CD8-positive, alpha-beta T cell (primary cell): ENCODE measurements at regions of chr9 and their contacts with region 1.

Region 1: DNA sequence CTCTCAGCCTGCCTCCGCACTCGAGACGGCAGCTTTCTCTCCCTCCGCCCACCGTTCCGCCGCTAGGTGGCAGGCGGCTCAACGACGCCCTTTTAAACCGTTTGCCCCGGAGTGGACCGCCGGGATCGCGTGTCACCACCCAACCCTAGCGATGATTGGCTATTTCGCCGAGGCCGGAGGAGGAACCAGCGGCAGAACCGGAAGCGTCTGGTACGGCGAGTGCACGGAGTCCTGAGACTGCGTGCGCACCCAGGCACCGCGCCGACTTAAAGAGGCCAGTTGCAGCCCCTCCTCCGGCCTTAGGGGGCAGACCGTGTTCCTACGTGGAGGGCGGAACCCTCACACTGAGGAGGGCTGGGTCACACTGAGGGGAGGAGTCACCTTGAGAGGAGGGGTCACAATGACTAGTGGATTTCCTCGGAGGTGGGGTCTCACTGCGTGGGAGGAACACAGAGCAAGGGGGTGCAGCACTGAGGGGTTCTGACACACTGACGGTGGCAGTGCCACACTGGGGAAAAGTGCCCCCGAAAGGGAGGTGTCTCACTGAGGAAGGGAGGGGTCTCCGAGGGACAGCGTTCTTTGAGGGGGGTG is 980 bp upstream of the TESK1 start:
- DNase-seq: peak; percentile 98 to 100 (median 99)
- ATAC-seq: peak; percentile 91
- H3K4me3 ChIP-seq: peak overlapping the region; percentile 61 to 83
- H3K4me3 Mint-ChIP-seq: peak overlapping the region; percentile 93
- H3K27ac ChIP-seq: peak overlapping the region; percentile 61 to 83
- H3K27ac Mint-ChIP-seq: peak overlapping the region; percentile 93
- H3K4me1 ChIP-seq: peaks cover 23% of the 10 kb centered on the region
- H3K4me1 Mint-ChIP-seq: peaks cover 31% of the 10 kb centered on the region
- H3K27me3 ChIP-seq: no peaks in the 10 kb centered on the region
- H3K27me3 Mint-ChIP-seq: no peaks in the 10 kb centered on the region
- CTCF ChIP-seq: peak; percentile 92

Region 2: GRCh38 chr9:34665381-34666250 is 938.5 kb before region 1 on chr9:
- CTCF ChIA-PET with region 1: no interaction called
- POLR2A ChIA-PET with region 1: no interaction called
- intact Hi-C with region 1: loop called (anchors 10 kb)
- DNase-seq: peak; percentile 75 to 96 (median 89)
- ATAC-seq: peak; percentile 83
- H3K4me3 ChIP-seq: peak overlapping the region; percentile 86 to 93
- H3K4me3 Mint-ChIP-seq: peak overlapping the region; percentile 92
- H3K27ac ChIP-seq: peak overlapping the region; percentile 96 to 99
- H3K27ac Mint-ChIP-seq: peak overlapping the region; percentile 97
- H3K4me1 ChIP-seq: peaks cover 37% of the 10 kb centered on the region
- H3K4me1 Mint-ChIP-seq: peaks cover 36% of the 10 kb centered on the region
- H3K27me3 ChIP-seq: no peaks in the 10 kb centered on the region
- H3K27me3 Mint-ChIP-seq: no peaks in the 10 kb centered on the region
- CTCF ChIP-seq: no peak

Region 3: DNA sequence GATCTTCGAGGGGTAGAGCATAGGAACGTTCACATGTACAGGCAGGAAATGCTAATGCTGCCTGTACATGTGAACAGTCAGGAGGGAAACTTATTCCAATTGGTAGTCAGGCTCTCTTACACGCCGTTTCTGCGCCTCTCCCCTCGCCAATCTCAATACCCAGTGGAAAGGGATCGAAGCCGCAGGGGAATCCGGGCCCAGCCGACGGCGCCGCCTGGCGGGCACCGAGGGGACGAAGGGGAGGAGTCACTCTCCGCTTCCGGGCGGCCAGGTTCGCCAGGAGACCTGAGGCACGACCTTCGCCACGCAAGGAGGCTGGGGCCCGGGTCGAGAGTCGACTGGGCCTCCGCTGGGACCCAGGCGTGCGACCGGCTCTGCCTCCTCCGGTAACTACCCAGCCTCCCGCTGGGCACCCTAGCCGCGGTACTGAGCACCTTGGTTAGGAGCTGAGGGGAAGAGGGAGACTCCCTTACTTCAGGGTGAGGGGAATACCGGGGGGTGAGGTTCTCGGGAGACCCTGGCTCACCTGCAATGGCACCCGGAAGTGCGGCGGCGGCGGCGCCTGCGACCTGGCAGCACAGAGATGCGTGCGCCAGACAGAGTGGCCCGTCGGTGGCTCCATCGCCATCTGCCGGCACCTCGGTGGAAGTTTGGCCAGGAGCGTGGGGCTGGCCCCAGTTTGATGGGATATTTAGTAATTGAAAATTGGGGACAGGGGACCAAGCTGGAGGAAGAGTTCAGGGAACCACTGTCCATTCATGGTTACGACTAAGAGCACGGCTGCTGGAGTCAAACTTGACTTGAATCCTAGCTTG is 507.8 kb before region 1 on chr9 and contains the start of gene PIGO:
- CTCF ChIA-PET with region 1: no interaction called
- POLR2A ChIA-PET with region 1: no interaction called
- intact Hi-C with region 1: loop called in 1 of 2 experiments (anchors 5 kb)
- DNase-seq: peak; percentile 78 to 94 (median 89)
- ATAC-seq: peak; percentile 90
- H3K4me3 ChIP-seq: peak within 1 kb of the TSS; percentile 95 to 99
- H3K4me3 Mint-ChIP-seq: peak within 1 kb of the TSS; percentile 88
- H3K27ac ChIP-seq: peak within 1 kb of the TSS; percentile 95 to 100
- H3K27ac Mint-ChIP-seq: peak within 1 kb of the TSS; percentile 95
- H3K4me1 ChIP-seq: peaks cover 24% of the 10 kb centered on the region
- H3K4me1 Mint-ChIP-seq: peaks cover 32% of the 10 kb centered on the region
- H3K27me3 ChIP-seq: no peaks in the 10 kb centered on the region
- H3K27me3 Mint-ChIP-seq: no peaks in the 10 kb centered on the region
- CTCF ChIP-seq: peak; percentile 75
- total RNA-seq, gene PIGO: 15.1 to 16.4 TPM

Region 4: DNA sequence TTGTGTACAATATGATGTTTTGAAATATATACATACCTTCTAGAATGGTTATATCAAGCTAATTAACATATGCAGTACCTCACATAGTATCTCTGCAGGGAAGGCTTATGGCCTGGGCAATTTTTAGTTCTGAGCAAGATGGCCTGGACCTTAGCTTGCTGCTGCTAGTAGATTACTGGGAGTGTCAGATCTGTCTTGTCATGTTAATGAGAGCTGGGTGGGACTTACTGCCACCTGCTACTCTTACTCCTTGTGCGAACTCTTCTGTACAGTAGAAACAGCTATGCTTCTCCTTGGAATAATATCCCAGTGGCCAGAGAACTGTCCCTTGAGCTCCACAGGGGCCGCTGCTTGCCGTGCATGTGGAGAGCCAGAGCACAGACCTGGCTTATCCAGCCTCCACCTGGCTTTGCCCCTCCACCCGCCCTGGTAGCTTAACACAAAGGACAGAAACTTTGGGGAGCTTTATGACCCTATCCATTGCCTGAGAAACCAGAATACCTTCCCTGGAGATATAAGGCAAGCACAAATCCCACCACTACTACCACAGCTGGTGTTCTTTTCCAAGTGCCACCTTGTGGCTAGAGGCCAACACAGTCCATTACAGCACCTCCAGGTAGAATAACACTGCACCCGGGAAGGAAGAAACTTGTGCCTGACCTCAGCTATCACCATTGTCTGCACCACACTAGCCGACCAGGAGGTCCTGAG is 188.5 kb before region 1 on chr9:
- CTCF ChIA-PET with region 1: no interaction called
- POLR2A ChIA-PET with region 1: no interaction called
- intact Hi-C with region 1: no loop called
- DNase-seq: peak in 1 of 9 experiments; percentile 7
- ATAC-seq: no peak
- H3K4me3 ChIP-seq: no peak overlapping the region
- H3K4me3 Mint-ChIP-seq: no peak overlapping the region
- H3K27ac ChIP-seq: no peak overlapping the region
- H3K27ac Mint-ChIP-seq: no peak overlapping the region
- H3K4me1 ChIP-seq: no peaks in the 10 kb centered on the region
- H3K4me1 Mint-ChIP-seq: no peaks in the 10 kb centered on the region
- H3K27me3 ChIP-seq: no peaks in the 10 kb centered on the region
- H3K27me3 Mint-ChIP-seq: peaks cover 51% of the 10 kb centered on the region
- CTCF ChIP-seq: no peak

Region 5: DNA sequence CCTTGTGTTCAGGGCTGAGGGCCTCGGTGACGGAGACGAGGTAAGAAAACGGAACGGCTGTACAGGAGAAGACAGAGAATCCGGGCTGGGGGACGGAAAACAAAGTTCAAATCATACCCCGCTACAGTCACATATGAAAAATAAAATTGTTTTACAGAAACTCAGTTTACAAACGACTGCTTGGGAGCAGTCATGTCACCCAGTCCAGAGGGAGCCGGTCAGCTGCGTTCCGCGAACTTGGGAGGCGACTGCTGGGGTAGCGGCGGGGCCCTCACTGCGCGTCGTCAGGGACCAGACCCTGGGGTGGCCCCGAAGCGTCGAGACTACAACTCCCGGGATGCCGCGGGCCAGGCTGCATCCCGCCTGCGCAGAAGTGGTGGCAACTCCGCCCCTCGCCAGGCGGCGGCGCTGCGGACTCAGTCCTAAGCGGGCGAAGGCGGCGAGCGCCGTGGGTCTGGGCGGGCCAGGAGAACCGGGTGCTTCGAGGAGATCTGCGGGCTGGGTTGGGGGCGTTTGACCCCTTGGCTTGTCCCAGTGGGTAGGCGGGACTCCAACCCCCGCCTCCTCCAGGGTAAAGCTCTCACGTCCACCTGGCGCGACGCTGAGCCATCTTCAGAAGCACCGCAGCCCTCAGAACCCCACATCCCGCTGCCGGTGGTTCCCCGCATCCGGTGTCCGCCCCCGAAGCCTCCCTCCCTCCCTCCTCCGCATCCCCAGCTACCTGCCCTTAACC is 42.6 kb after region 1 on chr9:
- CTCF ChIA-PET with region 1: interaction called, 32 read pairs
- POLR2A ChIA-PET with region 1: interaction called, 16 read pairs
- intact Hi-C with region 1: loop called (anchors 1 kb)
- DNase-seq: peak; percentile 85 to 95 (median 90)
- ATAC-seq: peak; percentile 86
- H3K4me3 ChIP-seq: peak overlapping the region; percentile 71 to 82
- H3K4me3 Mint-ChIP-seq: peak overlapping the region; percentile 93
- H3K27ac ChIP-seq: peak overlapping the region; percentile 67 to 89
- H3K27ac Mint-ChIP-seq: peak overlapping the region; percentile 95
- H3K4me1 ChIP-seq: peaks cover 55% of the 10 kb centered on the region
- H3K4me1 Mint-ChIP-seq: peaks cover 61% of the 10 kb centered on the region
- H3K27me3 ChIP-seq: no peaks in the 10 kb centered on the region
- H3K27me3 Mint-ChIP-seq: no peaks in the 10 kb centered on the region
- CTCF ChIP-seq: peak; percentile 77

Region 6: DNA sequence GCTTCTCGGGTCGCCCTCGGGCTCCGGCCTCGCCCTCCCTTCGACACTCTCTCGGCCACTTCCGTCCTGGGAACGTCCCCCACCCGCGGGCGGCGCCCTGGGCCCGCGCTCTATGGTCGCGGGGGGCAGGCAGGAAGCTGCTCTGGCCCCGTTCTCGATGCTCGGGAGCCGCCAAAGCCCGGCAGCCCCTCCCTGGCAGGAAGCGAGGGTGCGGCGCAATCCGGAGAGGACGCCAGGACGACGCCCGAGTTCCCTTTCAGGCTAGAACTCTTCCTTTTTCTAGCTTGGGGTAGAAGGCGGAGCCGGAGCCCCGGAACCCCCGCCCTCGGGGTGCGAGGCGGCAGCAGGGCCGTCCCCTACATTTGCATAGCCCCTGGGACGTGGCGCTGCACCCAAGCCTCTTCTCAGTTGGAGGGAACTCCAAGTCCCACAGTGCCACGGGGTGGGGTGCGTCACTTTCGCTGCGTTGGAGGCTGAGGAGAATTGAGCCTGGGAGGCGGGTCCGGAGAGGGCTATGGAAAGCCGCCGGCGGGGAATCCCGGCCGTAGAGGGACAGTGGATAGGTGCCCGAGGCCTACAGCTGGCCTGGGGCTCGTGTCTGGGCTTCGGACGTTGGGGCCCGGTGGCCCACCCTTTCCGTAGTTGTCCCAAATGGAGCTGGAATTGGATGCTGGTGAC is 128.2 kb after region 1 on chr9 and contains the starts of genes CREB3 and TLN1:
- CTCF ChIA-PET with region 1: interaction called, 8 read pairs
- POLR2A ChIA-PET with region 1: interaction called, 17 read pairs
- intact Hi-C with region 1: loop called (anchors 1 kb)
- DNase-seq: peak; percentile 92 to 98 (median 96)
- ATAC-seq: peak; percentile 91
- H3K4me3 ChIP-seq: peak within 1 kb of the TSS; percentile 91 to 99
- H3K4me3 Mint-ChIP-seq: peak within 1 kb of the TSS; percentile 93
- H3K27ac ChIP-seq: peak within 1 kb of the TSS; percentile 84 to 96
- H3K27ac Mint-ChIP-seq: peak within 1 kb of the TSS; percentile 88
- H3K4me1 ChIP-seq: peaks cover 62% of the 10 kb centered on the region
- H3K4me1 Mint-ChIP-seq: peaks cover 24% of the 10 kb centered on the region
- H3K27me3 ChIP-seq: no peaks in the 10 kb centered on the region
- H3K27me3 Mint-ChIP-seq: no peaks in the 10 kb centered on the region
- CTCF ChIP-seq: no peak
- total RNA-seq, gene CREB3: 13.1 to 14.2 TPM
- total RNA-seq, gene TLN1: 128 to 129 TPM

Region 7: DNA sequence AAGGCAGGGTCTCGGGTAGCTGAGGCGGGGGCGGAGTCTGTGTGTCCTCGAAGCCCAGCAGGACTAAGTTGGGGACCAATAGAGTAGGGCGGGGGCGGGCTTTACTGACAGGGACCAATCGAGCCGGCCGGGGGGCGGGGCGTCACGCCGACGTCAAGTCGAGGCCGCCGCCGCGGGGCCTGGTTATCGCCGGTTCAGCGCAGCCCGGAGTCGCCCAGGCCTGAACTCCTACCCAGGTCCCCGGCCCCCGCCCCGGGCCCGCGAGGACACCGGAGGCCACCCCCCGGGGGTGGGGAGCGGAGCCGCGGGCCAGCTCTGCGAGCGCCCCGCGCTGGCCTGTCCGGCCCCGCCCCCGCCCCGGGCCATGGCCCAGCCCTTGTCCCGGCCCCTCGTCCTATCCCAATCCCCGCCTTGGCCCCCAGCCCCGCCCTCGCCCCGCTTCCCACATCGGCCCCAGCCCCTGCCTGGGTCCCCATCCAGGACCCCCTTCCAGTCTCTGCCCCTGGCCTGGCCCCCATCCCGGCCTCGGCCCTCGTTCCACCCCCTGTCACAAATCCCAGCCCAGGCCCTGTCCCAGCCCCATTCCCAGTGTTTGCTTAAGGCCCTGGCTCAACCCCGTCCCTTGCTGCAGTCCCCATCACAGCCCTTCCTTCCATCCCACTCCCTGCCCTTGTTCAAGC is 225.1 kb after region 1 on chr9 and contains the start of gene TMEM8B:
- CTCF ChIA-PET with region 1: no interaction called
- POLR2A ChIA-PET with region 1: interaction called, 3 read pairs
- intact Hi-C with region 1: loop called (anchors 1 to 5 kb)
- DNase-seq: peak; percentile 88 to 96 (median 94)
- ATAC-seq: peak; percentile 93
- H3K4me3 ChIP-seq: peak within 1 kb of the TSS; percentile 67 to 89
- H3K4me3 Mint-ChIP-seq: peak within 1 kb of the TSS; percentile 95
- H3K27ac ChIP-seq: peak within 1 kb of the TSS; percentile 64 to 71
- H3K27ac Mint-ChIP-seq: peak within 1 kb of the TSS; percentile 91
- H3K4me1 ChIP-seq: peaks cover 13% of the 10 kb centered on the region
- H3K4me1 Mint-ChIP-seq: peaks cover 41% of the 10 kb centered on the region
- H3K27me3 ChIP-seq: no peaks in the 10 kb centered on the region
- H3K27me3 Mint-ChIP-seq: no peaks in the 10 kb centered on the region
- CTCF ChIP-seq: no peak
- total RNA-seq, gene TMEM8B: 6.4 to 7.2 TPM

Region 8: GRCh38 chr9:36765468-36766341 is 1161.6 kb after region 1 on chr9:
- CTCF ChIA-PET with region 1: no interaction called
- POLR2A ChIA-PET with region 1: no interaction called
- intact Hi-C with region 1: loop called (anchors 10 kb)
- DNase-seq: peak; percentile 68 to 95 (median 89)
- ATAC-seq: peak; percentile 99
- H3K4me3 ChIP-seq: peak overlapping the region; percentile 47 to 54
- H3K4me3 Mint-ChIP-seq: no peak overlapping the region
- H3K27ac ChIP-seq: peak overlapping the region; percentile 23 to 39
- H3K27ac Mint-ChIP-seq: peak overlapping the region; percentile 71
- H3K4me1 ChIP-seq: peaks cover 6% of the 10 kb centered on the region
- H3K4me1 Mint-ChIP-seq: peaks cover 6% of the 10 kb centered on the region
- H3K27me3 ChIP-seq: peaks cover 0 to 7% of the 10 kb centered on the region in 2 experiments
- H3K27me3 Mint-ChIP-seq: peaks cover 5% of the 10 kb centered on the region
- CTCF ChIP-seq: no peak